ENCODE measurements at regions of chr6 and their contacts with region 1.

Region 1: DNA sequence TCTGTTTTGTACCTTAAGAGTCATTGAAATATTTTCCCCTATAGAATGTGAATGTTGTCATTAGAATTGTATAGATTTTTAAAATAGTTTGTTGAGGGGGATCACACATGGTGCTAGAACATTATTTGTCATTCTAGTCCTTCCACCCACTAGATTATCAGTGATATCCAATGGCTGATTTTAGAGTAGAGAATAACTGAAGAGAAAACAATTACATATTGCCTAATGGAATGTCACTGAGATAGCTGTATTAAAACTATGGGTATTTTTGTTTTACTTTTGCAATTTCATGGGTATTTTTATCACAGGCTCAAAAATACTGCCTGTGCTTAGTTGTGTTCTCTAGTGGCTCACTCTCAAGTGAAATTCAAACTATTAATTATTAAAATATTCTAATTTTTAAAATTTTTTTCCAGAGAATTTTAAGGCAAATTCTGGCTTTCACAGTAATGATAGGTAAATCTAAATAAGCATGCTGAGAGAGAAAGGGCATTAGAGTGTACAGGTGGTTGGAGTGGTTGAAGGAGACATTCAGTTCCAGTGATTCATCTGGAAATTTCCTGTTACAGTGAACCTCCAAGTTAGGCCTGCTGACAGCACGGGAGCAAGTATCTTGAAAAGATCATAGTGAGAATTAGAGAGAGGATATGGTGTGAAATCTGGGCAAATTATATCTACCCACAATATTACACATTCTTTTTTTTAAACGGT is 399.6 kb downstream of the NKAIN2 start:
- DNase-seq: no peak

Region 2: DNA sequence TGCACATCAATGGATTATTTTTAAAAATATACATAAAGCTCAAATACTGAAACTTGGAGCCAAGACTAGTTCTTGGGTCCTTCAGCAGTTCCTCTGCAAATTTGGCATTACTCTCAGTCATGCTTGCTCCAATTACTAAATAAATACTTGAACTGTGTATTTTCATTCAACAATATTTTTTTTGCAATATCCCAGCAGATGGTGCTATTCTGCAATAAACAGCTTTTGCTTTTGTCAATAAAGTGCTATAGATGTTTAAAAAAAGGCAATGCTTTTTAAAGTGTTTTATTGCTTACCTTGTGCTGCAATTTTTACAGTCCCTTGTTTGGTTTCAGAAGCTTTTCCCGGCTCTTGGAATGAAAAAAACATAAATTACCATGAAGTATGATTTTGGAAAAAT is 809.9 kb before region 1 on chr6:
- intact Hi-C with region 1: loop called in 1 of 2 experiments (anchors 10 kb)
- DNase-seq: no peak